ENCODE measurements at regions of chr1 and their contacts with region 1.

Region 1: DNA sequence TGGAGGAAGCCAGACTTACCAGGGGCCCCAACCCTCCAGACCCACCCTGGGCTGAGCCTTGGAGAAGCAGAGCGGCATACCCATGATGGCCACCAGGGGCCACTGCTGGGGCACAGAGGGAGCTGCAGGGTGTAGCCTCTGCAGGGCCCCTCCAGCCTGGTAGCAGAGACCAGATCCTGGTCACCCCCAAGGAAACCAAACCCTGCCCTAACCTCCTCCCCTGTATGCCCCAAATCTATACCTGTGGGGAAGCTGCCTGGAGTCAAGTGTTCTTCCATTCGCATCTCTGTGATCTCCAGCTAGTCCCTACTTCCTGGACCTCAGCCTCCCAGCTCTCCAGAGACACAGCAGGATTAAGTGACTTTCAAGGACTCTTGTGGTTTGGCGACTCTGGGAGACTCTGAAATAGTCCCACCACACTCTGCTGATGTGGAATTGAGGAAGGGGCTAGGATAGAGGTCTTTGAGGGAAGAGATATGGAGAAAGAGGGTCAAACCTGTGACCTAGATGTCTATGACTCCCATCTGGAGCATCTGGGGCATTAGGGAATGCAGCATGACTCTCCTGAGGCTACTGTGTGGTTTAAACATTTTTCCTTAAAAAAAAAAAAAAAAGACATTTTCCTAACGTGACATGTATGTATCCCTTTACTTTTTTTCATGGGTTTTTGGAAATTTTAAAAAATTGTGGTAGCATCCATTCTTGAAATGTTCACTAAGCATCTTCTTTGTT is 119.2 kb upstream of the IPO9 start:
- H3K4me3 ChIP-seq: no peak overlapping the region
- H3K27ac ChIP-seq: no peak overlapping the region
- H3K4me1 ChIP-seq: peaks cover 12% of the 10 kb centered on the region
- CTCF ChIP-seq: peak; percentile 83

Region 2: GRCh38 chr1:201536543-201536942 is 173.2 kb before region 1 on chr1:
- CTCF ChIA-PET with region 1: interaction called, 45 read pairs
- POLR2A ChIA-PET with region 1: interaction called, 4 read pairs
- H3K4me3 ChIP-seq: no peak overlapping the region
- H3K27ac ChIP-seq: no peak overlapping the region
- H3K4me1 ChIP-seq: peaks cover 4% of the 10 kb centered on the region; the same call in 1 of the 2 replicates
- CTCF ChIP-seq: no peak

Region 3: DNA sequence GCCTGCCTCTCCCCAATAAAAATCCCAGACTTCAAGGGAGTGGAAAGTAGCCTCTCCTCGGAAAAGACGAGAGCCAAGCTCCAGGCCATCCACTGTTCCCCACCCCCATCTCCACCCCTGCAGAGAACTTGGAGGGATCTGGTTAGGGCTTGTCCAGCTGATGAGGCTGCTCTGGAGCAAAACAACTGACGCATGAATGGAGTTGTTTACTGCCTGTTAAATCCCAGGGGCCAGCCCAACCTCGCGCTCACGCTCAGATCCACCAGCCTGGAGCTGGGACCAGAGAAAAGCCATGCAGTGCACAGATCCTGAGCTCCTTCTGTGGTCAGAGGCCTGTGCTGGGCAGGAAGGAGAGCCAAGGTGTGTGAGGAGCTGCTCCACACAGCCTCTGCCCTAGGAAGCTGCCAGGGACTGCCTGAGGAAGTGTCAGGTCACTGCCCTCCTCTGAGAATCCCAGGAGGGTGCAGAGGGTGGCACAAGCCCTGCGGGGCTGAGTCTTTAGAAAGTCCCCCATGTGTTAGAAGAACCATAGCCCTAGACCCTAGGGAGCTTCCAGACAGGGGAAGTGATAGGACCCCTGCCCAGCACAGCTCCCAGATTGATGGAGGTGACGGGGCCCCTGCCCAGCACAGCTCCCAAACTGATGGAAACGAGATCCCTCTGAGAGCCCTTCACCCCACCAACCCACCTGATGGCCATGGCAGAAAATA is 10.2 kb after region 1 on chr1:
- CTCF ChIA-PET with region 1: interaction called, 16 read pairs
- POLR2A ChIA-PET with region 1: interaction called, 4 read pairs
- H3K4me3 ChIP-seq: no peak overlapping the region
- H3K27ac ChIP-seq: peak overlapping the region; percentile 27; the same call in 1 of the 2 replicates
- H3K4me1 ChIP-seq: peaks cover 25% of the 10 kb centered on the region
- CTCF ChIP-seq: no peak

Region 4: DNA sequence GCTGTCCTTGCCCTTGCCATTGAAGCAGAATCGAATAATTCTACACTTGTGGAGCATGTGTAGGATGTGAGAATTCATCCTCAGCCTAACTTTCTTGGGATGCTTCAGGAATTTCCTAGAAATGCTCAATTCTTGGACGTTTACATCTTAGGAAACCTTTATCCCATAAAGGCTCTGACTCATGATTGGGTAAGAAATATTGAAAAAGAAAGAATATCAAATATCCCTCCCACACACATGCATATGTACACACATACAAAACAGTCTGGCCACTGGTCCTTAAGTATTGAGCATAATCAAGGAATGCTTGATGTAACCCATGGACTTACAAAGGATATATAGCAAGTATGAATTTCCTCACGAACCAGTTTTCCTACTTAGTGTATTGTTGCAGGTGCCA is 35.3 kb after region 1 on chr1:
- CTCF ChIA-PET with region 1: interaction called, 17 read pairs
- POLR2A ChIA-PET with region 1: interaction called, 5 read pairs
- H3K4me3 ChIP-seq: no peak overlapping the region
- H3K27ac ChIP-seq: no peak overlapping the region
- H3K4me1 ChIP-seq: no peaks in the 10 kb centered on the region
- CTCF ChIP-seq: no peak

Measured in HEK293 (cell line).